Left cardiac atrium (tissue), 4 donors: ENCODE measurements at regions of chr2 and their contacts with region 1.

Region 1: DNA sequence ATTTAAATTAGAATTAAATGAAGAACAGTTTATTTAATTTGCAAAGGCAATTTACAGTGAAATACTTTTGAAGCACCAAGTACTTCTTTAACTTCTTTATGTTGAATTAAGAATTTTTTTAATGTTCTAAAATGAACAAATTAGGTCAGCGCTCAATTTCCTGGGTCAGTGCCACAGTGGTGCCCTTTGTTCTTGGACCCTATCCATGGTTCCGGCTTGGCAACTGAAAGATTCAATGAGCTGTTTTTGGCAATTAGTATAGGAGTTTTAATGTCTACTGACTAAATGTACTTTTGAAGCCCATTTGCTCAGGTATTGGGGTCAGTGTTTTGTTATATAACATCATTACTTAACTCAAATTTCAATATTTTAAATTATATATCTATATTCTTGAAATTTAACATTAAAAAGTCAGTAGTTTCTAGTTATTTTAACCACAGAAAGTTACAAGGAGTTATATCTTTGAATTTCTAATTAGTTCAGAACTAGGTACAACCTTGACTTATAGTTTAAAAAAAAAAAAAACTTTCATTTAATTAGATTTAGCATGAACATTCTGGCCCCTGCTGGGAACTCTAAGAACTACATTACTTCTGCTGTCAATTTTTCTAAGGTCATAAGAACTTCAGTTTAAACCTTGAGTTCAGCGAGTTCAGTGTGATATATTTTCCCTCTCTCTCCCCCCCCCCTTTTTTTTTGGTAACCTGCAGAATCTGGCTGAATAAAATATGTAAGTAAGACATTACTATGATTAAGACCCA is 7.6 kb upstream of the MSTN start:
- DNase-seq: no peak
- ATAC-seq: no peak

Region 2: DNA sequence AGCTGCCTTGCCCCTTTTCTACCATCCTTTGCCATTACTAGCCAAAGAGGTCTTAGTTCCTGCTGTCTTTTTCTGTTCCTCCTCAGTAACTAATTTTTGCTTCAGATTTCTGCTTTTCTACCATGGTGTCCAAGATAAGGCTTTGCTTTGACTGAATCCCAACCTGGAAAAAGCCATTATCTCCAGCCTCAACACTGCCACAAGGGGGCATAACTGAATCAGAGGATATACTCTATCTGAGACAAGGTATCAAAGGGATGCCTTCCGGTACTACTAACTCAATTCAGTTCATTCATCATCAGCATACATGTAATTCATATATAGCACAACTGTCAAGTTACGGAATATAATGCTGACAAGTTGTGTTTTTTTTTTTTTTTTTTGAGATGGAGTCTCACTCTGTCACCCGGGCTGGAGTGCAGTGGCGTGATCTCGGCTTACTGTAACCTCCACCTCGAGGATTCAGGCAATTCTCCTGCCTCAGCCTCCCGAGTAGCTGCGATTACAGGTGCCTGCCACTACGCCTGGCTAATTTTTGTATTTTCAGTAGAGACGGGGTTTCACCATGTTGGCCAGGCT is 318.9 kb before region 1 on chr2:
- intact Hi-C with region 1: loop called in 1 of 2 experiments (anchors 10 kb)
- DNase-seq: no peak
- ATAC-seq: peak in 1 of 2 donors; percentile 53